ENCODE measurements at regions of chr6 and their contacts with region 1.

Region 1: DNA sequence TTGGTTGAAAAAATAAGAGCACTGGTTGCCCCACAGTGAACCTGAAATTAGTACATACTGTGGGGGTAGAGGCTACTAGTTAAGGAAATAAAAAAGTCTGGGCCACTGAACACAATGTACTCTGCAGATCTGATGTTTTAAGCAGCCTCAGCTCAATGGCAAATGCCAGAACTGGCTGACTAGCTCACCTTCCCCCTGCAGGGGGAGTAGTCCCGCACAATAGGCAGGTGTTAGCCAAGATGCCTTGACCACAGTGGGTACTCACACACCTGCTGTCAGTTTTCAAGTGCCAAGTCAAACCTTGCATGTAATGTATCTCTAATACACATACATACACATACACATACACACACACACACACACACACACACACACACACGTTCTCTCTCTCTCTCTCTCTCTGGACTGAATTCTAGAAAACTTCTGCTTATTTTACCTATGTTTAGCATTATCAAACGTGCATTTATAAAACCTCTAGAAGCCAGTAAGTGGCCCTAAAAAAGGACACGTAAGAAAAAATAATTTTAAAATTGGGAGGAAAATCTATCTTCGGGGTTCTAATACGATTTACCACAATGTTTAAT is 36.1 kb downstream of the GMDS start:
- DNase-seq: peak; percentile 60
- ATAC-seq: peak; percentile 66
- H3K4me3 Mint-ChIP-seq: no peak overlapping the region
- H3K27ac Mint-ChIP-seq: no peak overlapping the region
- H3K4me1 Mint-ChIP-seq: no peaks in the 10 kb centered on the region
- H3K27me3 Mint-ChIP-seq: no peaks in the 10 kb centered on the region

Region 2: DNA sequence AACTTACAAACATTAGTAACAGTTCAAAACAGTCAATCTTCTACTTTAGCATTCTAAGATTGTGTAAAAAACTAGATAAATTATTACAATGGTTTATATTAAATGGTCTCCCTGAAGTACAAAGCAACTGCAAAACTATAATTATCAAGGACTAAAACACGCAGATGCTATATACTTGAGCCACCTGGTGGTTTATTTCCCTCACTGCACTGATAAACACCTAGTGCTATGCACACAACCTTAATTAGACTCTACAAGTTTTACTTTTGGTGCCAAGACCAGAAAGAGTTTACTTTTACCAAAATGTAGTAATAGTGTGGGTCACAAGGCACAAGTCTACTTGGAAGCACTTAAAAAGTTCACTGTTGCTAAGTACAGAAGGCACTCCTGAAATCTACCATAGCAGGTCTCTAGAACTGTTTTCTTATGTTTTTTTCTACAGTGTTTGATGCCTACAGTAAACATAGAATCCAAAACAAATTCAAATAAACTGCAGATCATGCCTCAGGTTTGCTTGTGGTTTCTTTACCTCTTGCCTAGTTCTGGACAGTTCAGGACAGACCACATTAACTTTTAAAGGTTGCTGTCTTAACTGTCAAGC is 13.1 kb before region 1 on chr6:
- CTCF ChIA-PET with region 1: interaction called, 12 read pairs
- POLR2A ChIA-PET with region 1: interaction called, 3 read pairs
- intact Hi-C with region 1: no loop called
- DNase-seq: peak; percentile 34
- ATAC-seq: peak; percentile 76
- H3K4me3 Mint-ChIP-seq: no peak overlapping the region
- H3K27ac Mint-ChIP-seq: no peak overlapping the region
- H3K4me1 Mint-ChIP-seq: no peaks in the 10 kb centered on the region
- H3K27me3 Mint-ChIP-seq: peaks cover 2% of the 10 kb centered on the region

Region 3: GRCh38 chr6:2448820-2449571 is 239.7 kb after region 1 on chr6:
- CTCF ChIA-PET with region 1: no interaction called
- POLR2A ChIA-PET with region 1: no interaction called
- intact Hi-C with region 1: loop called in 1 of 2 experiments (anchors 2 kb)
- DNase-seq: peak; percentile 41
- ATAC-seq: peak; percentile 23
- H3K4me3 Mint-ChIP-seq: peak overlapping the region; percentile 24
- H3K27ac Mint-ChIP-seq: no peak overlapping the region
- H3K4me1 Mint-ChIP-seq: peaks cover 3% of the 10 kb centered on the region
- H3K27me3 Mint-ChIP-seq: peaks cover 5% of the 10 kb centered on the region

Measured in activated CD4-positive, alpha-beta T cell treated with anti-CD3 and anti-CD28 coated beads for 36 hours (primary cell).